Activated CD8-positive, alpha-beta T cell treated with anti-CD3 and anti-CD28 coated beads, Interleukin-2, amount 10 ng/mL, durations not matched to agents 7 days and 5 days (primary cell): ENCODE measurements at regions of chr11 and their contacts with region 1.

Region 1: DNA sequence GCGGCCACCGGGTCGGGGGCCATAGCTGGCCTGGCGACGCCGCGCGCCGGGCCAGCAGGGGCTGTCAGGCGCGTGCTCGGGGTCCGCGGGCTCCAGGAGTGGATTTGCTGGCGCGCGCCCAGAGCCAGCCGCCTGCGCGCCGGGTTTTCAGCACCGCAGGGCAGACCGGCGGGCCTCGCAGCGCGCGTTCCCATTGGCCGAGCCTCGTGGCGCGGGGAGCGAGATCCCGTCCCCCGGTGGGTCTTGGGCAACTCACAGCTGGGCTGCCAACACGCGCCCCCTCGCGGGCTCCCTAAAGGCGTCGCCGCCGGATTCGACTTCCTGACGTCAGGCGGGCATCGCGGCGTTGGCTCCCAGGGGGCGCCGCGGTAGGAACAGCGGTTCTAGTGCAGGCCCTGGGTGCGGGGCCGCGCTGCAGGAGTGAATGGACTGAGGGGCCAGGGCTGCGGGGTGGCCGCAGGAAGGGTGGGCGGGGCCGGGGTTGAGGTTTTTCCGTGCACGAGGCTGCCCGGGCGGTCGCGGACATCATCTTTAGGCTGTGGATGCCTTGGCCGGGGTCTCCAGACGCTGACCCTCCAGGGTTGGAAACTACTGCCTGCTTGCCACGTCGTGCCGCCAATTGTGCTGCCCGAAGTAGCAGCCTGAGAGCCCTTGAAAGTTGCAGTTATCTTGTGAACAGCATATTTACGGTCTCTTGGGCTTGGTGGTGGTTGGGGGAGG is at the start of gene FADS1:
- DNase-seq: peak; percentile 92
- ATAC-seq: peak; percentile 74
- H3K4me3 Mint-ChIP-seq: peak within 1 kb of the TSS; percentile 98
- H3K27ac Mint-ChIP-seq: peak within 1 kb of the TSS; percentile 97
- H3K4me1 Mint-ChIP-seq: peaks cover 23% of the 10 kb centered on the region
- H3K27me3 Mint-ChIP-seq: no peaks in the 10 kb centered on the region
- total RNA-seq, gene FADS1: 84.1 to 92.8 TPM

Region 2: GRCh38 chr11:61803889-61804647 is 12.8 kb before region 1 on chr11:
- CTCF ChIA-PET with region 1: interaction called, 129 read pairs
- POLR2A ChIA-PET with region 1: interaction called, 20 read pairs
- DNase-seq: no peak
- ATAC-seq: no peak
- H3K4me3 Mint-ChIP-seq: no peak overlapping the region
- H3K27ac Mint-ChIP-seq: peak overlapping the region; percentile 43
- H3K4me1 Mint-ChIP-seq: peaks cover 11% of the 10 kb centered on the region
- H3K27me3 Mint-ChIP-seq: no peaks in the 10 kb centered on the region

Region 3: DNA sequence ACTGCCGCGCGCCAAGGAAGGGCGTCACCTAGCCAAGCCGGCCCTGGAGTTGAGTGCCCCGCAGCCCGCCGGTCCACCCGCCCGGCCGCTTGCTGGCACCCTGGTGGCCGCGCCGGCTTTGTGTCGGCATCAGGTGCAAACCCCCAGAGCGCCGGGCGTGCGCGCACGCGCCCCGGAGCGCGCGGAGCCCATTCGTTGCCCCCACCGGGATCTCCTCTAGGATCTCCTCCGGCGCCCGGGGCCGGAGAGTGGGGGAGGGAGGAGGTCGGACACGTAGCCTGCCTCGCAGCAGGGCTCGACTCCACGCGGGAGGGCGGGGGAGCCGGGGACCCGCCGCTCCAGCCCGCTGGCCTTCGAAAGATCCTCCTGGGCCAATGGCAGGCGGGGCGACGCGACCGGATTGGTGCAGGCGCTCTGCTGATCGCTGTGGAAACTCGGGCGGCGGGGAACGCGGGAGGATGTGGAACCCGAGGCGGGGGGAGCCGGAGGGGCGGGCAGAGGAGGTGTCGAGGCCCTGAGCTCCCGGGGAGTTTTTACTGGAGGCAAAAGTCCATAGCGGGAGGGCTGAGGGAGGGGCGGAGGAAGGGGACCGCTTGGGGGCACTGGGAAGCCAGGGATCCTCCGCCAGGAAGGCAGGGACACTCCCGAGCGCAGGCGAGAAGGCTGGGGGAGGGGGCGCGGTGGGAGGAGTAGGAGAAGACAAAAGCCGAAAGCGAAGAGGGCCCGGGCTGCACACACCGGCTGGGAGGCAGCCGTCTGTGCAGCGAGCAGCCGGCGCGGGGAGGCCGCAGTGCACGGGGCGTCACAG is 10.9 kb after region 1 on chr11 and contains the start of gene FADS2:
- CTCF ChIA-PET with region 1: interaction called, 53 read pairs
- POLR2A ChIA-PET with region 1: interaction called, 48 read pairs
- DNase-seq: peak; percentile 96
- ATAC-seq: peak; percentile 86
- H3K4me3 Mint-ChIP-seq: peak within 1 kb of the TSS; percentile 89
- H3K27ac Mint-ChIP-seq: peak within 1 kb of the TSS; percentile 93
- H3K4me1 Mint-ChIP-seq: peaks cover 46% of the 10 kb centered on the region
- H3K27me3 Mint-ChIP-seq: peaks cover 2% of the 10 kb centered on the region
- total RNA-seq, gene FADS2: 395 to 416 TPM

Region 4: DNA sequence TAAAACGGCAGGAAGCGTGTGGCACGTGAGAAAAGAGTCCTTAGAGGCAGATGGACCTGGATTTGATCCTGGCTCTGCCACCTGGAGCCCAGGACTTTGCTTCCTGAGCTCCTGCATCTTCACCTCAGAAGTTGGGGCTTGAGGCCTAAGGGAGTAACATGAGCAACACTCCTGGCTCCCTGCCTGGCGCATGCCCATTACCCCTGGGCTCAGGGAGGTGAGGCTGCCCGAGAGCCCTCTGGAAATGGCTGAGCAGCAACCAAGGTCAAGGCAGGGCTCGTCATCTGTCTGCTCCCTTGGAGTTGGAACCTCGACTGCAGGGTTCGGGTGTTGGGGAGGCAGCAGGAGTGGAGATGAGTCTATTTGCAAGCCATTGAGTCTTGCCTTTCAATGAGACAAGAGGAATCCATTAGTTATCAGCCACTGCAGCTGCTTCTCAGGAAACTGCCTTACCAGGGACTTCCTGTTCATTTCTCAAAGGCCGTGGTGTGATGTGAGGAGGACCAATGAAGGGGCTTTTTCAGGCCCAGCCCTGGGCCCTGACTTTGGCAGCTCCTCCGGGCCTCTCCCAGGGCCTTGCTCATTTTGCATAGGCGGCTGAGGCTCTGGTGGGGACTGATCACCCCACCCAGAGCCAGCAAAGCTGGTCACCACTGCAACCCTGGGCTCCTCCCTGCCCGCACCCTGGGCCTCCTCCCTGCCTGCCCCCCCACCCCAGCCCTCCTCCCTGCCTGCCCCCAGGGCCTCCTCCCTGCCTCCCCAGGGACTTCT is 17.6 kb after region 1 on chr11:
- CTCF ChIA-PET with region 1: interaction called, 53 read pairs
- POLR2A ChIA-PET with region 1: interaction called, 48 read pairs
- DNase-seq: peak; percentile 91
- ATAC-seq: peak; percentile 99
- H3K4me3 Mint-ChIP-seq: peak overlapping the region; percentile 77
- H3K27ac Mint-ChIP-seq: peak overlapping the region; percentile 95
- H3K4me1 Mint-ChIP-seq: peaks cover 69% of the 10 kb centered on the region
- H3K27me3 Mint-ChIP-seq: no peaks in the 10 kb centered on the region